ENCODE measurements at regions of chr11 and their contacts with region 1.

Region 1: DNA sequence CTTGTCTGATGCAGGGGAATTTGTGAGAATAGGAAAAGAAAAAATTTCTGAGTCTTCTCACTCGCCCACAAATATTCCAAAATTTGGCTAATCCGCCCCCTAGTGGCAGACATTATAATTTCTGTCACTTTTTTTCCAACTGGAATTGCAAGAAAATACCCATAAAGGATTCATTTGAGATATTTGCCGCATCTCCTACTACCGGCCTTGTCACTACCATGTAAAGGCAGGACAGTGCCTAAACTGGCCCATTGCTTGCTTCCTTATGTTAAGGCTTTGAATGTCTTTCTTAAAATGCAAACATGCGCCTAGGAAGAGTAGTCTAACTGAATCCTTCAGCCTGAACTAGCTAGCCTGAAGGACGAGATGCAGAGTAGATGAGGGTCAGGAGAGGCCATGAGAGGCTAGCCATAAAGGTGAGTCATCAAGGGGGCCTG is 9.3 kb upstream of the CEP295 start:
- DNase-seq: peak in 3 of 5 donors; percentile 48 to 69 (median 64)
- H3K4me3 ChIP-seq: no peak overlapping the region
- H3K27ac ChIP-seq: no peak overlapping the region
- H3K4me1 ChIP-seq: no peaks in the 10 kb centered on the region
- H3K27me3 ChIP-seq: no peaks in the 10 kb centered on the region
- CTCF ChIP-seq: peak; percentile 66

Region 2: GRCh38 chr11:93234602-93235207 is 417.5 kb before region 1 on chr11:
- intact Hi-C with region 1: loop called (anchors 10 kb)
- DNase-seq: peak; percentile 80 to 91 (median 87)
- H3K4me3 ChIP-seq: peak overlapping the region in 1 of 3 donors; percentile 17
- H3K27ac ChIP-seq: no peak overlapping the region
- H3K4me1 ChIP-seq: no peaks in the 10 kb centered on the region
- H3K27me3 ChIP-seq: no peaks in the 10 kb centered on the region
- CTCF ChIP-seq: peak; percentile 93

Region 3: DNA sequence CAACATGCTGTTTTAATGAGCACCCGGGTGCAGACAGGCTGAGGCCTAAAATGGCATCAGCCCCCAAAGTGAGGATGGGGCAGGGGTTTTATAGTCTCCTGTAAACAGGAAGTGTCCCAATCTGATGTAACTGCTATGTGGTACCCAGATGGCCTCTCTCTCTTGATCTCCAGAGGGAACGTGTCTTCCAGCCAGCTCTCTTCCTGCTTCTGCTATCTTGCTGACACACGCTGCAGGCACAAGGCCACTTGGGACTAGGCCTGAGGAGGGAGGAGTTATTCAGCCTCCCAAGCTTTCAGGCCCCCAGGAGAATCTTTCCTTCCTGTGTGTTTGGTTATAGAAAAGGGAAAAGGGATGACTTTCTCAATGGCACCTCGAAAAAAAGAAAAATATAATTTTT is 209.6 kb after region 1 on chr11:
- intact Hi-C with region 1: no loop called
- DNase-seq: peak in 1 of 5 donors; percentile 71
- H3K4me3 ChIP-seq: no peak overlapping the region
- H3K27ac ChIP-seq: no peak overlapping the region
- H3K4me1 ChIP-seq: no peaks in the 10 kb centered on the region
- H3K27me3 ChIP-seq: no peaks in the 10 kb centered on the region
- CTCF ChIP-seq: no peak

Region 4: GRCh38 chr11:94002226-94002625 is 350.0 kb after region 1 on chr11:
- intact Hi-C with region 1: no loop called
- DNase-seq: no peak
- H3K4me3 ChIP-seq: no peak overlapping the region
- H3K27ac ChIP-seq: no peak overlapping the region
- H3K4me1 ChIP-seq: no peaks in the 10 kb centered on the region
- H3K27me3 ChIP-seq: no peaks in the 10 kb centered on the region
- CTCF ChIP-seq: no peak